ENCODE measurements at regions of chr4 and their contacts with region 1.

Region 1: DNA sequence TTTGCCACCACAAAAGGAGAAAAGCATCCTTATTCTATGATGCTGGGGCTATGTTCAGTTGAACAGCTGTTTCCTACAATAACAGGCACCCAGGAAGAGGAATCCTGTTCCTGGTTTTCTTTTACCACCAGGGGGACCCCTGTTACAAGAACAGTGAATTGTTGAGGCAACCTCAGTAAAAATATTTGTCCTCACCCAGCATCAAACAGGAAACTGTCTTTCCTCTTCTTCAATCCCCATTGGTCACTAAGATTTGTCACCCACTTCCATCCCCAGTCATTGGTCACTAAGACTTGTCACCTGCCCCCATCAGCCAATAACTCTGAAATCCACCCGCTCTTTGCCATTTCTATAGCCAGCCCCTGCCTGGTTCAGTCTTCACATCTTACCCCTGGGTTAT is 143.5 kb upstream of the GALNT7 start:
- DNase-seq: peak in 1 of 2 donors; percentile 71
- H3K4me3 ChIP-seq: no peak overlapping the region
- H3K27ac ChIP-seq: no peak overlapping the region
- H3K4me1 ChIP-seq: no peaks in the 10 kb centered on the region
- H3K27me3 ChIP-seq: no peaks in the 10 kb centered on the region
- CTCF ChIP-seq: peak; percentile 61 to 68 (median 63)

Region 2: GRCh38 chr4:172927096-172927814 is 97.9 kb before region 1 on chr4:
- intact Hi-C with region 1: no loop called
- DNase-seq: no peak
- H3K4me3 ChIP-seq: no peak overlapping the region
- H3K27ac ChIP-seq: no peak overlapping the region
- H3K4me1 ChIP-seq: no peaks in the 10 kb centered on the region
- H3K27me3 ChIP-seq: no peaks in the 10 kb centered on the region
- CTCF ChIP-seq: no peak

Region 3: GRCh38 chr4:172953896-172954568 is 71.1 kb before region 1 on chr4:
- intact Hi-C with region 1: no loop called
- DNase-seq: no peak
- H3K4me3 ChIP-seq: no peak overlapping the region
- H3K27ac ChIP-seq: no peak overlapping the region
- H3K4me1 ChIP-seq: no peaks in the 10 kb centered on the region
- H3K27me3 ChIP-seq: no peaks in the 10 kb centered on the region
- CTCF ChIP-seq: no peak

Region 4: DNA sequence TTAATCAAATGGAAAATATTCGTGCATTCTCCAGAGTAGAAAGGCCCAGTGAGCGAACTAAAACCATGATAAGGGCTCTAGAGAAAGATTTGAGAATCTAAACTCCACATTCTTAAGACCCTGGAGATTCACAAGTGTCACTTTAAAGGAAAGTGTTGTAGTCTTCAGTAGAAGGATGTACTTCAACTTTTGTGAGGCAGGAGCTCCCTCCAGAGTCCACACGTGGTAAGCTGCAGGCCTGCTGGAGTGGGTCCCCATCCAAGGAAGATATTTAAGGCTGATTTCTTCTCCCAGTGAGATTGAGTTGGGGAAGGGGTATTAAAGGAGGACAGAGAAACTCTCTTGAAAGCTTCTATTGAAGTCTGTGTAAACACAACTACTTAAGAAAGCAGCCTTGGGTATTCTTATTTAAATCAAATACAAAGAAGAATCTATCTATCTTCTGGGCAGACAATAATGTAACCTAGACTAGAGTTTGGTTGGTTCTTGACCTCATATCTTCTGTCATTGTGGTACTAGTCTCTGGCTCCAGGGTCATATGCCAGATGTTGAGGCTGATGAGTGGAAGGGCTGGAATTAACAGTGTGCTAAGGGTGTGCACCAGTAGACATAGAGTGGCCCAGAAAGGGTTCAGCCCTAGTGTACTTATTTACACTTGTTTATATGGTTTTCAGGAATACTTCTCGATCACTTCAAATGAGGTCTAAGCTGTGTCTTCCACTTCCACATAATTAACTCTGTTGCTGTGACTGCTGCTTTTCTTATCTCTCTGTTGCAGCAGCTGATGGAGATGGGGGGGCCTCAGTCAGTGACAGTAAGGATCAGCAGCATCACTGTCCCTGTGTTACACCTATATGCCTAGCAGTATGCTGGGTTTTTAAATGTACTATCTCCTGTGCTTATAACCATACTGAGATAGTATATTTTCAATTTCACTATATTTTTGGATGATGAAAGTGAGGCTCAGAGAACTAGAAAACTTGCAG is 232.9 kb after region 1 on chr4:
- intact Hi-C with region 1: loop called (anchors 1 kb)
- DNase-seq: peak in 1 of 2 donors; percentile 69
- H3K4me3 ChIP-seq: no peak overlapping the region
- H3K27ac ChIP-seq: no peak overlapping the region
- H3K4me1 ChIP-seq: no peaks in the 10 kb centered on the region
- H3K27me3 ChIP-seq: no peaks in the 10 kb centered on the region
- CTCF ChIP-seq: peak; percentile 56 to 71 (median 58)

Region 5: DNA sequence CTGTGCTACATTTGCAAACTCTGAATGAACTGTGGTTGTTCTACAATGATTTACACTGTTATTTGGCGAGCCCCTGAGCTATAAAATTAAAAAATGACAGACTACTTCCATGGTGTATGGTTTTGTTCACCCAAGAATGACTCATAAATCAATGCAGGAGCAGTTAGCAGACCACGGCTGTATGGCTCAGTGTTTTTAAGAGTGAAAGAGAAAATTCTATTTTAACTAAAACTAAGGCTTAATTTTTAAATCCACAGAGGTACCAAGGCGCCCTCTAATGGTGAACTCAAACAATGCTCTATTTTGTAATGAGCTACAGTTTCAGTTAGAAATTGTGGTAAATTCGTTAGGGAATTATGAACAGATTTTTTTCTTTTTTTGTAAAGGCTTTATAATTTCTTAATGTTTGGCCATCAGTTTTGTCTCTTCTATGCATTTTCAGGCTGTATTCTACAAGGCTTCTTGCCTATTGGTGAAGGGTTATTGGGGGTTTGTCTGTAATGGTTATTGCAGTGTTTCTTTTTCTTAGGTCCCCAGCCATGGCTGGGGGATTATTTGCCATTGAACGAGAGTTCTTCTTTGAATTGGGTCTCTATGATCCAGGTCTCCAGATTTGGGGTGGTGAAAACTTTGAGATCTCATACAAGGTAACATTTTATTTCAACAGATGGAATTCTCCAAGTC is 276.5 kb after region 1 on chr4:
- intact Hi-C with region 1: loop called (anchors 2 kb)
- DNase-seq: no peak
- H3K4me3 ChIP-seq: no peak overlapping the region
- H3K27ac ChIP-seq: peak overlapping the region in 1 of 2 donors; percentile 31
- H3K4me1 ChIP-seq: peaks cover 0 to 7% of the 10 kb centered on the region in 2 donors
- H3K27me3 ChIP-seq: no peaks in the 10 kb centered on the region
- CTCF ChIP-seq: peak; percentile 44 to 86 (median 64)

Region 6: DNA sequence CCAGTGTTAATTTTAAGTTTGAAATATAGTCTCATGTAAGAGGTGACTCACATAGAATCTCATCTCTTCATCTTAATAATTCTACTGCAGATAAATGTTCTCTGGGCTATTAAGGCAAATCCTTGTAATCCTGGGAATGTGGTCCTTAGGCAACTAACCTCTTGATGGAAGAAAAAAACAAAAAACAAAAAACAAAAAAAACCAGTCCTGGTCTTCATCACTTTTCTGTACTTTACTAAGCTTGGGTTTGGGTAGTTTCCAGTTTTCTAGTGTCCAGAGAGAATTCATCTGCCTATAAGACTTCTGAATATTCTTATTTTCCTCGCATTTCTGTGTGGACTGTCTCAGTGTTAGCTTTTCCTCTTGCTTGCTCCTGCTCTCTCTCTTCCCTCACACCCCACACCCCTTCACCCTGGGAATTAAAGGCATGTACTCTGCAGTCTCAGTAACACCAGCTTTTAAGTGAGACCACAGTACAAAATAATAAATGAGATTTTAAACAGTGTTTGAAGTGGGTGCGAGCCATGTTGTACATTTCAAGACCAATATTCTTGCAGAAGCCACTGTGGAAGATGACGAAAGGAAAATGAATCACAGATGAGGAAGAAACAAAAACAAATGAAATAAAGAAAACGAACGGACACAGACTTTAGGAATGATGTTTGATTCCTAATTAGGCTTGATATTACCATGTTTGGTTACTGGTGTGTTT is 453.2 kb after region 1 on chr4:
- intact Hi-C with region 1: no loop called
- DNase-seq: no peak
- H3K4me3 ChIP-seq: peak overlapping the region in 1 of 2 donors; percentile 35
- H3K27ac ChIP-seq: peak overlapping the region; percentile 69
- H3K4me1 ChIP-seq: peaks cover 0 to 9% of the 10 kb centered on the region in 2 donors
- H3K27me3 ChIP-seq: no peaks in the 10 kb centered on the region
- CTCF ChIP-seq: no peak